ENCODE measurements at regions of chr14 and their contacts with region 1.

Region 1: GRCh38 chr14:30610787-30611343 is 11.3 kb upstream of the SCFD1 start:
- DNase-seq: peak; percentile 91
- ATAC-seq: peak; percentile 86
- H3K4me3 ChIP-seq: peak overlapping the region; percentile 11; the same call in 1 of the 2 replicates
- H3K27ac ChIP-seq: peak overlapping the region; percentile 37
- H3K4me1 ChIP-seq: peaks cover 27% of the 10 kb centered on the region
- H3K27me3 ChIP-seq: no peaks in the 10 kb centered on the region
- CTCF ChIP-seq: peak; percentile 62

Region 2: DNA sequence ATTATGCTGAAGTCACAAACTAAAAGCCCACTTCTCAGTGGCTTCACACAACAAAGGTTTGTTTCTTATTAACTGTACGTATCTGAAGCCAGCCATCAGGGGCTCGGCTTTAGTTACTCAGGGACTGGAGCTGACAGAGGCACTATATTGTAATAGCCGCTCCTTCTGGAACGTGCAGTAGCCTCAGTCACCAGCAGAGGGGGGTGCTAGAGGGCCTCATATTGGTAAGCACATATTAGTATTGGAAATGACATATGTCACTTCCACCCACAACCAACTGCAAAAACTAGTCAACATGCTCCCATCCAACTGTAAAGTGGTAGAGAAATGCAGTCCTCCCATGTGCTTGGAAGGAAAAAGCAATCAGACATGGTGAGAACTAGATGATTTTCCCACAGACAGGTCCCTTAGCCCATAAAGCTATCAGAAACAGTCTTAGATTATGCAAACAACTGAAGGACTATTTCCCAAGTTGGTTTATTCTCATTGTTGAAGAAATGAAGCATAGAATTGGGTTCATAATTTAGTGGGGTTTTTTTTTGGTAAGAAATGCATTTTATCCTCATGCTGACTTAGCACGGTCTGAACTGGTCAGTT is 235.5 kb before region 1 on chr14:
- CTCF ChIA-PET with region 1: no interaction called
- POLR2A ChIA-PET with region 1: no interaction called
- intact Hi-C with region 1: loop called (anchors 1 kb)
- DNase-seq: peak; percentile 78
- ATAC-seq: peak; percentile 99
- H3K4me3 ChIP-seq: no peak overlapping the region
- H3K27ac ChIP-seq: no peak overlapping the region
- H3K4me1 ChIP-seq: no peaks in the 10 kb centered on the region
- H3K27me3 ChIP-seq: peaks cover 22% of the 10 kb centered on the region
- CTCF ChIP-seq: peak; percentile 88

Region 3: DNA sequence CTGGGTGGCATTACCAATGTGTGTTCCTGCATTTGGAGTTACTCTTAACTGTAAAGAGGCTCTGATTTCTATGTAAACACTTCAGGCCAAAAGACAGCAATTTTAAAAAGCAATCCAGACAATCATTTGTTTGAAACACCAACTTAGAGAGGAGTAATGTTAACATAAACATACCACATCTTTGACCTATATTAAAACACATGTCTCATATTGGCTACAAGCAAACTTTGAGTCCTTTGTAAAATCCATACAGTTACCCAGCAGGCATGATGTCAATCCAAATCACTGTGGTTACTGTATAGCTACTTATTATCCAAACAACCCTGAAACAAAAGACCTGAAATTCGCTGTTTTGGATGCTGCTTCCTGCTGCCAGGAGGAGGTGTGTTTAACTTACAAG is 59.4 kb before region 1 on chr14:
- CTCF ChIA-PET with region 1: no interaction called
- POLR2A ChIA-PET with region 1: no interaction called
- intact Hi-C with region 1: loop called (anchors 2 kb)
- DNase-seq: peak; percentile 85
- ATAC-seq: peak; percentile 65
- H3K4me3 ChIP-seq: peak overlapping the region; percentile 47
- H3K27ac ChIP-seq: peak overlapping the region; percentile 87
- H3K4me1 ChIP-seq: peaks cover 54% of the 10 kb centered on the region
- H3K27me3 ChIP-seq: no peaks in the 10 kb centered on the region
- CTCF ChIP-seq: no peak

Region 4: GRCh38 chr14:30638926-30639325 is 28.1 kb after region 1 on chr14:
- CTCF ChIA-PET with region 1: no interaction called
- POLR2A ChIA-PET with region 1: no interaction called
- intact Hi-C with region 1: loop called (anchors 2 kb)
- DNase-seq: no peak
- ATAC-seq: no peak
- H3K4me3 ChIP-seq: no peak overlapping the region
- H3K27ac ChIP-seq: no peak overlapping the region
- H3K4me1 ChIP-seq: peaks cover 6% of the 10 kb centered on the region
- H3K27me3 ChIP-seq: no peaks in the 10 kb centered on the region
- CTCF ChIP-seq: no peak

Region 5: DNA sequence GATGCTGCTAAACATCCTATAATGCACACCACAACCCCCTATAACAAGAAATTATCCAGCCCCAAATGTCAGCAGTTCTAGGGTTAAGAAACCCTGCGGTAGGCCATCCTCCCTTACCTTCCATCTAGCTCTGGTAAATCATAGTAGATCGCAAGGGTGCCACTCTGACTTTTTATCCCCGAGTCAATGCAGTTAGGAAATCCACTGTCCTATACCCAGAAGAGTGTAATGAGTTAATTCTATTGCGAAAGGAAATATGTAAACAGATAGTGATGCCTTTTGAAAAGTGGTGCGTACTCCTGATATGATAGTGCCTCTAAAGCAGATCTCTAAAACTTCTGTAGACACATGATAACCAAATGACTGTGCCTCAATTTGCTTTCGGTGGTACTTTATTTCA is 41.1 kb after region 1 on chr14:
- CTCF ChIA-PET with region 1: no interaction called
- POLR2A ChIA-PET with region 1: no interaction called
- intact Hi-C with region 1: no loop called
- DNase-seq: no peak
- ATAC-seq: no peak
- H3K4me3 ChIP-seq: no peak overlapping the region
- H3K27ac ChIP-seq: no peak overlapping the region
- H3K4me1 ChIP-seq: peaks cover 4% of the 10 kb centered on the region; the same call in 1 of the 2 replicates
- H3K27me3 ChIP-seq: no peaks in the 10 kb centered on the region
- CTCF ChIP-seq: no peak

Measured in PC-3 (cell line).